Endothelial cell of umbilical vein (primary cell): ENCODE measurements at regions of chr3 and their contacts with region 1.

Region 1: GRCh38 chr3:124032648-124033359 is 40.9 kb upstream of the ROPN1 start:
- DNase-seq: peak; percentile 90
- H3K4me3 ChIP-seq: peak overlapping the region; percentile 64 to 96 (median 65)
- H3K27ac ChIP-seq: peak overlapping the region; percentile 55
- H3K4me1 ChIP-seq: peaks cover 6% of the 10 kb centered on the region
- H3K27me3 ChIP-seq: peaks cover 22 to 31% of the 10 kb centered on the region in 2 experiments
- CTCF ChIP-seq: peak; percentile 48 to 70
- POLR2A ChIP-seq: peak; percentile 16

Region 2: DNA sequence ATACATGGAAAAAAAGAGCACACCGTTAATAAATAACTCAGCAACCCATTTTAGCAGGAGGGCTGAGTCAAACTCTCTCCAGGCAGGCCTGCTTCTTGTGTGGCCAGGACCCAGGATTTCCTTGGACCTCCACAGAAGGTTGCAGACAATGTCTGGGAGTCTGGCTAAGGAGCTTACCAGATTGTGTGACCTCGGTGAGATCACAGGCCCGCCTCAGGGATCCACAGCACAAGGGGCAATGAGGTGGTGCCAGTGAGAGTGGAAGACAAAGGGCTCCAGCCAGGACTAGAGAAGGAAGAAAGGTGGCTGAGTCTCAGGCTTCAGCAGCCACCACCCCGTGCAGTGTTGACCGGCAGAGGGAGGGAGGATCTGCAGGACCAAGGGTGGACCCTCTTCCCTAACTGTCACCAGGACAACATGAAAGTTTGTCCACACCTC is 863.3 kb before region 1 on chr3:
- CTCF ChIA-PET with region 1: no interaction called
- POLR2A ChIA-PET with region 1: no interaction called
- dilution Hi-C with region 1: no loop called
- intact Hi-C with region 1: no loop called
- DNase-seq: no peak
- H3K4me3 ChIP-seq: no peak overlapping the region
- H3K27ac ChIP-seq: no peak overlapping the region
- H3K4me1 ChIP-seq: no peaks in the 10 kb centered on the region
- H3K27me3 ChIP-seq: no peaks in the 10 kb centered on the region
- CTCF ChIP-seq: no peak
- POLR2A ChIP-seq: no peak

Region 3: GRCh38 chr3:124014366-124014942 is 18.4 kb before region 1 on chr3:
- CTCF ChIA-PET with region 1: interaction called, 48 read pairs
- POLR2A ChIA-PET with region 1: no interaction called
- dilution Hi-C with region 1: no loop called
- intact Hi-C with region 1: loop called (anchors 2 kb)
- DNase-seq: peak; percentile 23
- H3K4me3 ChIP-seq: no peak overlapping the region
- H3K27ac ChIP-seq: no peak overlapping the region
- H3K4me1 ChIP-seq: peaks cover 7% of the 10 kb centered on the region
- H3K27me3 ChIP-seq: peaks cover 0 to 5% of the 10 kb centered on the region in 2 experiments
- CTCF ChIP-seq: no peak
- POLR2A ChIP-seq: no peak

Region 4: GRCh38 chr3:124078953-124079911 is 46.4 kb after region 1 on chr3:
- CTCF ChIA-PET with region 1: interaction called, 28 read pairs
- POLR2A ChIA-PET with region 1: no interaction called
- dilution Hi-C with region 1: no loop called
- intact Hi-C with region 1: loop called (anchors 5 kb)
- DNase-seq: peak; percentile 34
- H3K4me3 ChIP-seq: no peak overlapping the region
- H3K27ac ChIP-seq: no peak overlapping the region
- H3K4me1 ChIP-seq: no peaks in the 10 kb centered on the region
- H3K27me3 ChIP-seq: peaks cover 0 to 4% of the 10 kb centered on the region in 2 experiments
- CTCF ChIP-seq: peak; percentile 29 to 58
- POLR2A ChIP-seq: no peak

Region 5: DNA sequence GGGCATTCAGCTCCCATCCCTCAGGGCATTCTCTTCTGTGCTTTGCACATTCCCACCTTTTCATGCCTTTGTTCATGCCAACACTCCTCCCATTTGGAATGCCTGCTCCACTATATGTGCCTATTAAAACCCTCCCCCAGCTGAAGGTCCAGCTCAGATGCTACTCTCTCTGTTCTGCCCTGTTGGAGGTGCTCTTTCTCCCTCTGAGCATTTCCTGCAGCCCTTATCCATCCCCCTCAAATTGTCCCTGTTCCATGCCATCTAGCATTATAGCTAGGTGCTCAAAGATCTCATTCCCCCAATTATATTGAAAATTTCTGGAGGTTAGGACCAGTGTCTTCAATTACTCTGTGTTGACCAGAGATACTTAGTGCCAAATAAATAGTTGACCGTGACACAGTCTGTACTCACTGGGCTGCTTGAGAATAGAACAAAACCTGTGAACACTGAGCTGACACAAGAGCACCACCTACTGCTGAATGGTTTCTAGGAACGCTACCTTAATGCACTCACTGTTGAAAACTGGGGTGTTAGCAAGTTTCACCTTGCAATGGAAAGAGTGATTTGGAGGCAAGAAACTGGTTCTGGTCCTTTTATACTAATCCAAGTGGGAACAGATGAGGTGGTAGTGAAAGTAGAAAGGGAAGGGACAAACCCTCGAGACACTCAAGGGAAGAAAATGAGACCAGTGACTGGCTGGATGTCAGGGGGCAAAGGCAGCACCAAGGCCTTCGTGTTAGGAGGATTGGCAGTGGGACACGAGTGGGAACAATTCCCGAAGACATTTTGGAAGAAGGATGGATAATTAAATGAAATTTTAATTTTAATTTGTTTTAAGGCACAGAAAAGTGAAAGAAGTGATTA is 248.9 kb after region 1 on chr3:
- CTCF ChIA-PET with region 1: interaction called, 33 read pairs
- POLR2A ChIA-PET with region 1: no interaction called
- dilution Hi-C with region 1: no loop called
- intact Hi-C with region 1: loop called (anchors 5 kb)
- DNase-seq: peak; percentile 54
- H3K4me3 ChIP-seq: no peak overlapping the region
- H3K27ac ChIP-seq: no peak overlapping the region
- H3K4me1 ChIP-seq: peaks cover 10% of the 10 kb centered on the region
- H3K27me3 ChIP-seq: peaks cover 0 to 2% of the 10 kb centered on the region in 2 experiments
- CTCF ChIP-seq: peak; percentile 46 to 55
- POLR2A ChIP-seq: no peak

Region 6: DNA sequence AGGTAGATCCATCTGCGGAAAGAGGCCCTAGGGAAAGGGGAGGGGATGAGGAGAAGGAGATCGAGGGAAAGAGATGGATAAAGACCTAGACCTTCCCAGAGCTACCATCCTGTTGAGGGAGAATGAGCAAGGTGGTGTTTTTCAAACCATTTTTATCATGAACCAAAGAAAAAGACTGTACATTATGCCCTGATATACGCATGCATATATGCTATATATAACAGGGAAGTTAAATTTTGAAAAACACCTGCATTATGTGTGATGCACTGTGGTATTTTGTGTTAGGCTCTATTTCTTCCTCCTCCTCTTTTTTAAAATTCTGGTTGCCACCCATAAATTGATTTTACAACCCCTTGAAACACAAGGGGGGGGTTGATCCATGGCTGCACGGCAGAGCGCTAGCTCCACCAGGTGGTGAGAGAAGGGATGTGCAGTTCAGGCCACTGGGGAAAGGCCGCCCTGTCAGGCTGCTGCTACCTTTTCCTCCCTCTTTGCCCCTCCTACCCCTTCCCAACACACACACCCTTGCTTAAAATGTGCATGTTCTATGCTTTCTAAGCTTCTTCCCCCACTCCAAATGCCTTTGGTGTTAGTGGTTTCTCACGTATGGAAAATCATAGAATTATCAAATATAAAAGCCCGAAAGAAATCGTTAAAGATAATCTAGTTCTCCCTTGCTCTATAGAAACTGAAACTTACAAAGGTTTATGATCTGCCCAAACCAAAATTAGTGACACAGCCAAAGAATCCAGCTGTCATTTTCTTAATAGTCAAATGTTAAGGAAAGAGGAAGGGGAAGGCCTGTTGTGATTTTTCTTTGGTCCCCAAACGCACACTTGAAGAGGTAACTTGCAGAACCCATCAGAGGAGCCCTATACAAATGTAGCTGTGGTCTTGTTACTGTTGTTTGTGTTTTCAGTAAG is 435.4 kb after region 1 on chr3:
- CTCF ChIA-PET with region 1: interaction called, 3 read pairs
- POLR2A ChIA-PET with region 1: no interaction called
- dilution Hi-C with region 1: no loop called
- intact Hi-C with region 1: loop called (anchors 1 kb)
- DNase-seq: peak; percentile 58
- H3K4me3 ChIP-seq: no peak overlapping the region
- H3K27ac ChIP-seq: no peak overlapping the region
- H3K4me1 ChIP-seq: no peaks in the 10 kb centered on the region
- H3K27me3 ChIP-seq: peaks cover 0 to 2% of the 10 kb centered on the region in 2 experiments
- CTCF ChIP-seq: peak; percentile 91 to 97
- POLR2A ChIP-seq: no peak